ENCODE measurements at regions of chr1 and their contacts with region 1.

Region 1: DNA sequence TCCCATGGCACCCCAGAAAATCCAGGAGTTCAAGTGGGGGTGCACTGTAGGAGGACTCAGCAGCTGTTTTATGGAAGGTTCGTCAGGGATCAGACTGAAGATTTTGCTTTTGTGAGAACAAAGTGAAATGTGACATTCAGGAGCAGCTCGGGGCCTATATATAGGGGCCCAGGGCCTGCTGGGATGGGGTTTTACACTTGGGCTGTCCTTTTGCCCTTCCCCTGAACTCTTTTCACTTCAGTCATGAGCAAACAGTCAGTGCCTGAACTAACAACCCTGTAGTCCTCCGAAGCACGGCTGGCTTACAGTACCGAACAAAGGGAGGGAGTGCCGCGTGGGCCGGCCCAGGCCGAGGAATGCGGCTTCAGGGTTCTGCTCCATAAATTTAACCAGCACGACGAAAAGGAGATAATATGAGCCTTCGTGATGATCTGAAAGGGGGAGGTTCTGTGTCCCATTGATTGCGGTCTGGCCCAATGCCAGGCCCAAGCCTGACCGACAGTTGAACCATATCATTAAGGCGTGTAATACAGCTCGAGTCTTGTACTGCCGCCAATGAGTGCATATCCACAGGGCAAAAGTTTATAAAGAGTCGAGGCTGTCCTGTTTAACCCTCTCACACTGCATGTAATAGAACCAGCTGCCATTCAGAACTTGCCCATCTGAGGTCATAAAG is 139.9 kb downstream of the DHRS3 start:
- DNase-seq: peak in 5 of 14 experiments; percentile 6 to 38 (median 31)
- ATAC-seq: peak; percentile 30
- H3K4me3 ChIP-seq: no peak overlapping the region
- H3K4me3 Mint-ChIP-seq: peak overlapping the region; percentile 78
- H3K27ac ChIP-seq: peak overlapping the region; percentile 36 to 52
- H3K27ac Mint-ChIP-seq: peak overlapping the region; percentile 88
- H3K4me1 ChIP-seq: peaks cover 70% of the 10 kb centered on the region
- H3K4me1 Mint-ChIP-seq: peaks cover 92% of the 10 kb centered on the region
- H3K27me3 ChIP-seq: no peaks in the 10 kb centered on the region
- H3K27me3 Mint-ChIP-seq: no peaks in the 10 kb centered on the region
- CTCF ChIP-seq: no peak

Region 2: GRCh38 chr1:11730429-11730891 is 747.6 kb before region 1 on chr1:
- CTCF ChIA-PET with region 1: no interaction called
- POLR2A ChIA-PET with region 1: no interaction called
- intact Hi-C with region 1: no loop called
- DNase-seq: peak in 9 of 14 experiments; percentile 11 to 82 (median 39)
- ATAC-seq: peak; percentile 83
- H3K4me3 ChIP-seq: peak overlapping the region; percentile 34
- H3K4me3 Mint-ChIP-seq: peak overlapping the region; percentile 92
- H3K27ac ChIP-seq: peak overlapping the region; percentile 24 to 35
- H3K27ac Mint-ChIP-seq: peak overlapping the region; percentile 81
- H3K4me1 ChIP-seq: peaks cover 55% of the 10 kb centered on the region
- H3K4me1 Mint-ChIP-seq: peaks cover 51% of the 10 kb centered on the region
- H3K27me3 ChIP-seq: no peaks in the 10 kb centered on the region
- H3K27me3 Mint-ChIP-seq: no peaks in the 10 kb centered on the region
- CTCF ChIP-seq: no peak

Region 3: GRCh38 chr1:12434174-12434573 is 43.9 kb before region 1 on chr1:
- CTCF ChIA-PET with region 1: interaction called, 3 read pairs
- POLR2A ChIA-PET with region 1: interaction called, 10 read pairs
- intact Hi-C with region 1: loop called in 1 of 2 experiments (anchors 2 kb)
- DNase-seq: peak in 12 of 14 experiments; percentile 11 to 82 (median 45)
- ATAC-seq: peak; percentile 78
- H3K4me3 ChIP-seq: no peak overlapping the region
- H3K4me3 Mint-ChIP-seq: peak overlapping the region; percentile 62
- H3K27ac ChIP-seq: peak overlapping the region; percentile 17 to 43
- H3K27ac Mint-ChIP-seq: peak overlapping the region; percentile 84
- H3K4me1 ChIP-seq: peaks cover 55% of the 10 kb centered on the region
- H3K4me1 Mint-ChIP-seq: peaks cover 61% of the 10 kb centered on the region
- H3K27me3 ChIP-seq: no peaks in the 10 kb centered on the region
- H3K27me3 Mint-ChIP-seq: no peaks in the 10 kb centered on the region
- CTCF ChIP-seq: no peak

Region 4: DNA sequence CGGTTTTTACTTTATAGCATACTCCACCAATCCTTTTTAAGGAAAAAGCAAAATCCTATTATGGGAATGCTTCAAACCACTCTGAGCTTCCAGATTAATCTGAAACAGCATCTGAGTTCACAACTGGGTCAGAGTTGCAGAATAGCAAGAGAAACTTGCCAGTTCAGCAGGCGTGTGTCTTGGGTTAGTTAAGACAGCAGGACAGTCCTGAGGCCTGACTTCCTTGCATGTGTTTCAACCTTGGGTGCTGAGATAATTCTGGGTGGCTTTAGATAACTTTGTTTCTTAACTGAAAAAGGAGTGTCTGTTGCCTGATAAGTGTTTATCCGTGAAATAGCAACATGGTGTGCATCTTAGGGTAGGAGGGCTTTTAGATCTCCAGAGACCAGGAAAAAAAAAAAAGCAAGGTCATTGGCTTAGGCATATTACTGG is 29.3 kb before region 1 on chr1:
- CTCF ChIA-PET with region 1: no interaction called
- POLR2A ChIA-PET with region 1: interaction called, 10 read pairs
- intact Hi-C with region 1: loop called in 1 of 2 experiments (anchors 2 kb)
- DNase-seq: peak in 1 of 14 experiments; percentile 13
- ATAC-seq: no peak
- H3K4me3 ChIP-seq: peak overlapping the region; percentile 19
- H3K4me3 Mint-ChIP-seq: no peak overlapping the region
- H3K27ac ChIP-seq: peak overlapping the region; percentile 33 to 64
- H3K27ac Mint-ChIP-seq: peak overlapping the region; percentile 85
- H3K4me1 ChIP-seq: peaks cover 59% of the 10 kb centered on the region
- H3K4me1 Mint-ChIP-seq: peaks cover 89% of the 10 kb centered on the region
- H3K27me3 ChIP-seq: no peaks in the 10 kb centered on the region
- H3K27me3 Mint-ChIP-seq: no peaks in the 10 kb centered on the region
- CTCF ChIP-seq: no peak

Region 5: DNA sequence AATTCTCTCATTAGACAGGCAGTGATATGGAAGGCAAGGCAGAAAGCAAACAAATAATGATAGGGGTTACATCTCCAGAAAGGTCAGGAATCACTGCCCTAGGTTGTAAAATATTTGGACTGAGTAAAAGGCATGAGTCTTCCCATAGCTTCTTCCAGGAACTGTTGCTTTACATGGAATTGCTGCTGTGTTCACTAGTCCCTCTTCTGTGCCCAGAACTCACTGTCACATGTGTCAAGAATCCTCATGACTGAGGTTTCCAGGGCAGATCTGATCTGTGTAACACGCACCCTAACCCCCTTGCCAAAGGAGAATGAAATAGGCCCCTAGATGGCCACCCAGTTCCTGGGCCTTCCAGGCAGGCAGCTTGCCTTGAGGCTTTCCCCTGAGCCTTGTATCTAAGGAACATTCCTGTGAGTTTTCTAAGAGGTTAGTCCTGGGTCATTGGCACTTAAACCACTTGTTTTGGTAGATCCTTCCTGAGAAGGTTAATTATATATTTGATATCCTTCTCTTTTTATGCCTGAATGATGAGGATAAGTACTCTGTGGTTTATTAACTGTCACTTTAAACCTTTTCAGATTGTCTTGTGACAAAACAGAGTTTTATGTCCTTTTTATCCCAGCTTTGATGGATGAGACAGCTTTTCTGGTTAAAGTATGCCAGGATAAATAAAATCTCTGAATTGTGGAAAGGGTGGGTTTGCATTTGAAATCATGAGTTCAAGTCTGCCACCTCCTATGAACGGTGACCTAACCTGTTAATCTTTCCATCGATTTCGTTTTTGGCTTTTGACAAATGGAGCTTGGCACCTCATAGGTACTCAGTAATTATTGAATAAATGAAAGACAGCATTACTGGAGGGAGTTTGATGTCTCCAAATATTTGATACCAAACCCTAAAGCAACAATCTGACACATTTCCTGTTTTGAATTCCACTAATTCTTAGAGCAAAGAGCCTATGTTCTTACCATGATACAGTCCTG is 23.4 kb before region 1 on chr1:
- CTCF ChIA-PET with region 1: no interaction called
- POLR2A ChIA-PET with region 1: interaction called, 15 read pairs
- intact Hi-C with region 1: loop called (anchors 2 kb)
- DNase-seq: no peak
- ATAC-seq: no peak
- H3K4me3 ChIP-seq: no peak overlapping the region
- H3K4me3 Mint-ChIP-seq: peak overlapping the region; percentile 48
- H3K27ac ChIP-seq: no peak overlapping the region
- H3K27ac Mint-ChIP-seq: peak overlapping the region; percentile 86
- H3K4me1 ChIP-seq: peaks cover 75% of the 10 kb centered on the region
- H3K4me1 Mint-ChIP-seq: peaks cover 90% of the 10 kb centered on the region
- H3K27me3 ChIP-seq: no peaks in the 10 kb centered on the region
- H3K27me3 Mint-ChIP-seq: no peaks in the 10 kb centered on the region
- CTCF ChIP-seq: no peak

Region 6: GRCh38 chr1:12511516-12512468 is 33.7 kb after region 1 on chr1:
- CTCF ChIA-PET with region 1: no interaction called
- POLR2A ChIA-PET with region 1: interaction called, 68 read pairs
- intact Hi-C with region 1: loop called in 1 of 2 experiments (anchors 2 kb)
- DNase-seq: no peak
- ATAC-seq: no peak
- H3K4me3 ChIP-seq: peak overlapping the region; percentile 46
- H3K4me3 Mint-ChIP-seq: peak overlapping the region; percentile 76
- H3K27ac ChIP-seq: peak overlapping the region; percentile 53 to 89
- H3K27ac Mint-ChIP-seq: peak overlapping the region; percentile 96
- H3K4me1 ChIP-seq: peaks cover 44% of the 10 kb centered on the region
- H3K4me1 Mint-ChIP-seq: peaks cover 61% of the 10 kb centered on the region
- H3K27me3 ChIP-seq: no peaks in the 10 kb centered on the region
- H3K27me3 Mint-ChIP-seq: no peaks in the 10 kb centered on the region
- CTCF ChIP-seq: no peak

Region 7: DNA sequence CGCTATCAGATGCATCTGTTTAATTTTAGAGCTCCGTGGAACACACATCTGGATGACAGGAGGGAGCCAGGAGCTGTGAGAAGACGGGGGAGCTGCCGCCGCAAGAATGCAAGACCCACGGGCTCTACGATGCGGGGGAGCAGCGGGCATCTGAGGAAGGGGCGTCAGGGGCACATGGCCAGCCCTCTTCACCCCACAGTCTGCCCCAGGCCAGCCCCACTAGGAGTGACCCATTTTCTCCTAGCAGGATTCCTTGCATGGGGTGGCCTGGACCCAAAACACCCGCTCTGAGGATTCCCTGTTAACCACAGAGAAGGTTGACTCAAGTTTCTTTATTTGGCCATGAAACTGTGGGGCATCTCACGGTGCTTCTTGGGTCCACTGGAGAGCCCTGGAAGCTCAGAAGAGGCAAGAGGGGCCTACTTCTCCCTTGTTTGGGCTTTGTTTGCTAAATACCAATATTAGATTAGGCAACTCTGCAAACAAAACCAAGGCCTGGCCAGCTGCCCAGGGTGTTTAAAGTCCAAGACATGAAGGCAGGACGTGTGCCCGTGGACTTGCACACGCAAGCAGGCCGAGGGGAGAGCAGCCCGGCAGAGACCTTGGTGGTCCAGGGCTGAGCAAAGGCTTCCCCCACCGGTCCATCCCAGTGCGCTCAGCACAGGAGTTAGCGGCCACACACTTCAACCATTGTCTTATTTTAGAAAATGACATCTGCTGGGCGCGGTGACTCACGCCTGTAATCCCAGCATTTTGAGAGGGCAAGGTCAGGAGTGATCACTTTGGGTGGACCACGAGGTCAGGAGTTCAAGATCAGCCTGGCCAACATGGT is 50.2 kb after region 1 on chr1:
- CTCF ChIA-PET with region 1: no interaction called
- POLR2A ChIA-PET with region 1: no interaction called
- intact Hi-C with region 1: no loop called
- DNase-seq: no peak
- ATAC-seq: no peak
- H3K4me3 ChIP-seq: no peak overlapping the region
- H3K4me3 Mint-ChIP-seq: no peak overlapping the region
- H3K27ac ChIP-seq: no peak overlapping the region
- H3K27ac Mint-ChIP-seq: no peak overlapping the region
- H3K4me1 ChIP-seq: peaks cover 2% of the 10 kb centered on the region
- H3K4me1 Mint-ChIP-seq: peaks cover 16% of the 10 kb centered on the region
- H3K27me3 ChIP-seq: no peaks in the 10 kb centered on the region
- H3K27me3 Mint-ChIP-seq: no peaks in the 10 kb centered on the region
- CTCF ChIP-seq: no peak

Region 8: DNA sequence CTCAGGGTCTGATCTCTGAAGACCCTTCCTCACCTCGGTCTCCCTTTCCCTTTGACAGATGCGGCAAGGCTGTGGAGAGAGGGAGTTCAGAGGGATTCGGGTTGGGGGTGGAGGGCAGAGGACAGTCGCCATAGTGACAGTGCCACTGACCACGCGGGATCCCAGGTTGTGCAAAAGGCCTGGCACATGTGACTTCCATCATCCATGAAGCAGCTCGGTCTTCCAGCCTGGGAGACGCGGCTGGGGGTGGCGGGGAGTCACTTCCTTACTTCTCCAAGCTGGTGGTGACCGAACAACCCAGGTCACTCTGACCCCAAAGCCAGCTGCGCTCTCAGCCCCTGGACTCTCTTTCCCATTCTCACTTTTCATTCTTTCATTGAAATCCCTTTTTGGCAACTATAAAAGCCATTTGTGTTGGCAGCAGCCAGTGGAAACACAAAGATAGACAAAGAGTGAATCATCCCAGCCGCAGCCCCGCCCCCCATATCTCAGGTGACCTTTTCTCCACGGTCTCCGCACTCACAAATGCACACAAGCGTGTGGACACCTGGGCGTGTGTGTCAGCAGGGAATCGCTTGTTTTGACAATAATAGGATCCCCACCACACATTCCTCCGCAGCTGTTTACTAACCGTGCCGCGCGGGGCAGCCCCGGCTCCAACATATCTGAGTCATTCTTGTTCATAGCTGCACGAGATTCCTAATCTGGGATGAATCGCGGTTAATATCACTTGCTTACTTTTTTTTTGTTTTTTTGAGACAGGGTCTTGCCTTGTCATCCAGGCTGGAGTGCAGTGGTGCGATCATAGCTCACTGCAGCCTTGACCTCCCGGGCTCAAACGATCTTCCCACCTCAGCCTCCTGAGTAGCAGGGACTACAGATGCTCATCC is 71.6 kb after region 1 on chr1:
- CTCF ChIA-PET with region 1: no interaction called
- POLR2A ChIA-PET with region 1: no interaction called
- intact Hi-C with region 1: no loop called
- DNase-seq: peak in 1 of 14 experiments; percentile 37
- ATAC-seq: no peak
- H3K4me3 ChIP-seq: no peak overlapping the region
- H3K4me3 Mint-ChIP-seq: no peak overlapping the region
- H3K27ac ChIP-seq: no peak overlapping the region
- H3K27ac Mint-ChIP-seq: no peak overlapping the region
- H3K4me1 ChIP-seq: no peaks in the 10 kb centered on the region
- H3K4me1 Mint-ChIP-seq: no peaks in the 10 kb centered on the region
- H3K27me3 ChIP-seq: no peaks in the 10 kb centered on the region
- H3K27me3 Mint-ChIP-seq: no peaks in the 10 kb centered on the region
- CTCF ChIP-seq: no peak